Activated T-helper 1 cell treated with anti-CD3 and anti-CD28 coated beads, Interleukin-12 subunit alpha, Interleukin-12 subunit beta, Interleukin-2, Interleukin-4 antibody, amounts not matched to agents 30 ng/mL and 10 ng/mL and 1 ng/mL, durations not matched to agents 14 hours and 24 hours and 36 hours (primary cell): ENCODE measurements at regions of chr20 and their contacts with region 1.

Region 1: DNA sequence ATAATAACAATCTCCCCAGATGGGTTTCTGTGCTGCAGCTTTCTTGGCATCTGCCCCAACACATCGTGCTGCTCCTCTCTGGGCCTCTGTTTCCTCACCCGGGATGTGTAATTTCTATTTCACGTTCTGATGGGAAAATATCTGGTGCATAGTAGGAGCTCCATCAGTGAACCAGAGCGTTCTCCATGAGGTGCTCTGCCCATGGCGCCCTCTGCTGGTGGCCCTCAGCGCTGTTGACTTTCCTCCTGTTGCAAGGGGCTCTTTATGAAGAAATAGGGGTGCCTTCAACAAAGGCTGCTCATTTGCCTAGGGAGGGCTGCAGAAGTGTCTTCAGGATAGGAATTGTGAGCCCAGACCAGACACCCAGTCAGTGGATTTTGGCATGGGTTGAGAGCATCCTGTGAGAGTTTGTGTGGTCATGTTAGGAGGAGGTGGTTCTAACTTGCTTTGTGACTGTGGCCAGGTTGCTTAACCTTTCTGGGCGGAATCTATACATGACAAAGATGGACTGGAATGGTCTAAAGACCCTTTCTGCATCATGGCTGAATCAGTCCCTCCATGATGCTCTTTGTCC is 8.1 kb downstream of the SCRT2 start:
- DNase-seq: peak; percentile 37
- H3K4me3 Mint-ChIP-seq: no peak overlapping the region
- H3K27ac Mint-ChIP-seq: no peak overlapping the region
- H3K4me1 Mint-ChIP-seq: peaks cover 7% of the 10 kb centered on the region
- H3K27me3 Mint-ChIP-seq: peaks cover 39% of the 10 kb centered on the region

Region 2: GRCh38 chr20:407133-407952 is 260.1 kb before region 1 on chr20:
- intact Hi-C with region 1: no loop called
- DNase-seq: peak; percentile 59
- H3K4me3 Mint-ChIP-seq: peak overlapping the region; percentile 86
- H3K27ac Mint-ChIP-seq: peak overlapping the region; percentile 95
- H3K4me1 Mint-ChIP-seq: peaks cover 47% of the 10 kb centered on the region
- H3K27me3 Mint-ChIP-seq: no peaks in the 10 kb centered on the region

Region 3: GRCh38 chr20:610130-611046 is 57.1 kb before region 1 on chr20 and contains the start of gene TCF15:
- intact Hi-C with region 1: loop called (anchors 5 kb)
- DNase-seq: peak; percentile 1
- H3K4me3 Mint-ChIP-seq: no peak within 1 kb of the TSS
- H3K27ac Mint-ChIP-seq: no peak within 1 kb of the TSS
- H3K4me1 Mint-ChIP-seq: no peaks in the 10 kb centered on the region
- H3K27me3 Mint-ChIP-seq: peaks cover 45% of the 10 kb centered on the region
- total RNA-seq, gene TCF15: 0.13 TPM in 1 of 2 replicates, not detected in the other

Region 4: GRCh38 chr20:653110-653589 is 14.3 kb before region 1 on chr20 and contains the start of gene SRXN1:
- intact Hi-C with region 1: loop called (anchors 1 kb)
- DNase-seq: peak; percentile 80
- H3K4me3 Mint-ChIP-seq: peak within 1 kb of the TSS; percentile 87
- H3K27ac Mint-ChIP-seq: peak within 1 kb of the TSS; percentile 81
- H3K4me1 Mint-ChIP-seq: peaks cover 35% of the 10 kb centered on the region
- H3K27me3 Mint-ChIP-seq: peaks cover 16% of the 10 kb centered on the region
- total RNA-seq, gene SRXN1: 28.8 and 30.2 TPM in 2 replicates